Dorsolateral prefrontal cortex (tissue), 120 donors: ENCODE measurements at regions of chr6 and their contacts with region 1.

Region 1: DNA sequence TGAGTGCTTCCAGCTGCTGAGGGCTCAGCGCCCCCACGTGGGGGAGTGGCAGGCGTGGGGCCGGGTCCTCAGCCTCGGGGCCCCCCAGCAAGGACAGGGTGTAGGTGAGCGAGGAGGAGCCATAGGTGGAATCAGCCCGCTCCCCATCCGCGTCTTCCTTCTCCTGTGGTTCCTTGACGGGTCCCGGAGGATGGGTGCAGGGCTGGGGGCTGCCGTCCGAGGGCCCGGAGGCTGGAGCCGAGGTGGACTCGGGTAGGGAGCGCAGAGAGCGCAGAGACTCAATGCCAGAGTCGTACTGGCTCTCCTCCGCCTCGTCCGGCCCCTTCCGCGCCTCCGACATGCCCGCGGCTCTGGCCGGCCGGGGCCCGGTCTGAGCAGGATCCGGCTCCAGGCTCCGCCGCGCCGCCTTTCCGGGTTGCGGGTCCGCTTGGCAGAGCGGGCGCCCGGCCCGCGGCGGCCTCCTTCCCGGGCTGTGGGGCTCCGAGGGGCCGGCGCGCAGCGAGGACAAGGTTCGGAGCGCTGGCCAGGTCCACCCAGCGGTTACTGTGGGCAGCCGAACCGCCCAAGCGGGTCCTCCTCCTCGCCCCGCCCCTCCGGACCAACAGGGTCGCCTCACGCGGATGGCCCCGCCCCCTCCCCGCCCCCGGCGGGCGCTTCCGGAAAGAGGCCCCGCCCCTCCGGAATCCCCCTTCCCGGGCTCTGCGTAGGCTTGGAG is at the start of gene NFKBIE:
- DNase-seq: peak; percentile 89 to 97 (median 92)
- H3K4me3 ChIP-seq: peak within 1 kb of the TSS; percentile 62 to 96 (median 85)
- H3K27ac ChIP-seq: peak within 1 kb of the TSS in 57 of 59 donors; percentile 8 to 91 (median 76)
- H3K27me3 ChIP-seq: peaks cover 0 to 7% (median 0%) of the 10 kb centered on the region in 45 donors
- CTCF ChIP-seq: peak in 44 of 56 donors; percentile 6 to 50 (median 28)
- total RNA-seq, gene NFKBIE: 2.9 to 14.4 (median 7.5) TPM

Region 2: DNA sequence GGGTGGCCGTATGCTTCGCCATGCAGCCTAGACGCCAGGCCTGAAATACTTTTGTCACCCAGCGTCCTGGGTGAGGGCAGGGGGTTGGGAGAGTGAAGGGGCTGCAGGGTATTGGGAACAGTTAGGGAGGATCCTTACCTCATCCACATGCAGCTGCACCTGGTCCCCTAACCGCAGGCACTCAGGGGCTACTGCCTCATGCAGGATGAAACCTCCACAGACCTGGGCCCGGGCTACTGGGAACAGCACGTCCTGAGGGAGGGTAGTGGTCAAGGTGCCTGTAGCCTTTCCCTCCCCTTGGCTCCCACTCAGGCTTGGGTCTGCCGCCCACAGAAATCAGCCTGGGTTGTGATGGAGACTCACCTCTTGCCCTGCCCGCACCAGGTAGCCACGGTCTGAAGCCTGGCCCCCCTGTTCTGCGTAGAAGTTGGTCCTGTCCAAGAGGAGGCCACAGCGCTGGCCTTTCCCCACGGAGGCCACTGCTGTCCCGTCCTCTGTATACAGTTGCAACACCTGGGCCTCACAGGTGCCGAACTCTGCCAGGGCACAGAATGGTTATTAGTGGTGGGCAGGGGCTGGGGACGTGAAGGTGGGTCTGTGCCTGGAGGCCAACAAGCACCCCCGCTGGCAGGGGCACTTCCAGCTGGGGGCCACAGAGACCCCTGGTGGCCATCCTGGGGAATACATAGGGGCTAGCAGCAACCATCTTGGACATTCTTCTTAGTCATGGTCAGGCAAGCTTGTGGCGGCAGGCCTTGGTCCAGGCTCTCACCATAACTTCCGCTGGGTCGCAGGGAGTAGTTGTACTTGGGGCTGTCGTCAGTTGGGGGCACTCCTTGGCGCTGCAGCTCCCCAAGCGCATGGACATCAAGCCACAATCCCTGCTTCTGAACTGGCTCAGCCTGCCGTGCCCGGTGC is 39.4 kb after region 1 on chr6:
- intact Hi-C with region 1: loop called (anchors 2 to 5 kb)
- DNase-seq: peak in 5 of 10 donors; percentile 32 to 65 (median 62)
- H3K4me3 ChIP-seq: no peak overlapping the region
- H3K27ac ChIP-seq: peak overlapping the region in 20 of 59 donors; percentile 0 to 74 (median 38)
- H3K27me3 ChIP-seq: no peaks in the 10 kb centered on the region
- CTCF ChIP-seq: peak; percentile 37 to 84 (median 74)

Region 3: GRCh38 chr6:44338228-44339122 is 73.3 kb after region 1 on chr6:
- intact Hi-C with region 1: loop called (anchors 1 to 2 kb)
- DNase-seq: peak; percentile 44 to 76 (median 70)
- H3K4me3 ChIP-seq: no peak overlapping the region
- H3K27ac ChIP-seq: peak overlapping the region in 41 of 59 donors; percentile 3 to 80 (median 46)
- H3K27me3 ChIP-seq: peaks cover 0 to 20% (median 0%) of the 10 kb centered on the region in 45 donors
- CTCF ChIP-seq: peak; percentile 51 to 88 (median 75)

Region 4: DNA sequence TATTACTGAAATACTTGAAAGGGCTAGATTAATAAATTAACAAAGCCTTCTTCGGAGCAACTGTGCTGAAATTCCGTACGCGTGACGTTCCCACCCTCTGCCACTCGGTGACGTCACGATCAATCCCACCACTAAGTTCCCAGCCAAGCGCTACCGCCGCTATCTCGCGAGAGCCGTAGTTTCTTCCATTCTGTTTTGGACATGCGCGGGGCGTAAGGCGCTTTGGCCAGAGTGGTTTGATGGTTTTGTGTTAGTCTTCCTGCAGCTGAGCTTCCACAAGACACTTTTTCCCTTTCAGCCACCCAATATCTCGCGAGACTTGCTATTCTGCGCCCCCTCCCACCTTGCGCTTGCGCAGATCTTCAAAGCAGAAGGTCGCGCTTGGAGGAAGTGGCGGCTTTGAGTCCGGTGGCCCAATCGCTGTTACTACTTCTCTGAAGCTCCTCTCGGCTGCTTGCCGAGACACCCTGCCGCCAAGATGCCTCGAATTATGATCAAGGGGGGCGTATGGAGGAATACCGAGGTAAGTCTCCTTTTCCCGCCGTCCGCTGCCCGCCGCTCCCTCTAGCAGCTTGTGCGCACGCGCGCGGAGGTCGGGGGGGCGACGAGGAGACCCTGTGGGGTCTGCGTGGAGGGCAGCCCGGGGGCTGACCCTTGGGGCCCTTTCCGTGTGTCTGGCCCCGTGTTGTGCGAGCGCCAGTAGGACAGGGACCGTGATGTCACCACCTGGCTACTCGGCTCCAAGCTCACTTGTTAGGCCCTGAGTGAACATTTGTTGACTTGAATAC is 122.4 kb after region 1 on chr6 and contains the start of gene CDC5L:
- intact Hi-C with region 1: loop called in 1 of 2 experiments (anchors 5 kb)
- DNase-seq: peak; percentile 77 to 96 (median 93)
- H3K4me3 ChIP-seq: peak within 1 kb of the TSS; percentile 51 to 100 (median 90)
- H3K27ac ChIP-seq: peak within 1 kb of the TSS; percentile 51 to 99 (median 96)
- H3K27me3 ChIP-seq: no peaks in the 10 kb centered on the region
- CTCF ChIP-seq: peak in 25 of 56 donors; percentile 6 to 43 (median 28)
- total RNA-seq, gene CDC5L: 13.5 to 25.8 (median 20.7) TPM